ENCODE measurements at regions of chr19 and their contacts with region 1.

Region 1: GRCh38 chr19:55503502-55504251 is 15.4 kb downstream of the SSC5D start:
- DNase-seq: peak; percentile 90
- H3K4me3 Mint-ChIP-seq: peak overlapping the region; percentile 62
- H3K27ac Mint-ChIP-seq: peak overlapping the region; percentile 40
- H3K4me1 Mint-ChIP-seq: peaks cover 14% of the 10 kb centered on the region
- H3K27me3 Mint-ChIP-seq: no peaks in the 10 kb centered on the region

Region 2: GRCh38 chr19:55146078-55146704 is 357.5 kb before region 1 on chr19:
- CTCF ChIA-PET with region 1: interaction called, 23 read pairs
- intact Hi-C with region 1: loop called (anchors 1 kb)
- DNase-seq: no peak
- H3K4me3 Mint-ChIP-seq: no peak overlapping the region
- H3K27ac Mint-ChIP-seq: no peak overlapping the region
- H3K4me1 Mint-ChIP-seq: peaks cover 6% of the 10 kb centered on the region
- H3K27me3 Mint-ChIP-seq: peaks cover 55% of the 10 kb centered on the region

Region 3: DNA sequence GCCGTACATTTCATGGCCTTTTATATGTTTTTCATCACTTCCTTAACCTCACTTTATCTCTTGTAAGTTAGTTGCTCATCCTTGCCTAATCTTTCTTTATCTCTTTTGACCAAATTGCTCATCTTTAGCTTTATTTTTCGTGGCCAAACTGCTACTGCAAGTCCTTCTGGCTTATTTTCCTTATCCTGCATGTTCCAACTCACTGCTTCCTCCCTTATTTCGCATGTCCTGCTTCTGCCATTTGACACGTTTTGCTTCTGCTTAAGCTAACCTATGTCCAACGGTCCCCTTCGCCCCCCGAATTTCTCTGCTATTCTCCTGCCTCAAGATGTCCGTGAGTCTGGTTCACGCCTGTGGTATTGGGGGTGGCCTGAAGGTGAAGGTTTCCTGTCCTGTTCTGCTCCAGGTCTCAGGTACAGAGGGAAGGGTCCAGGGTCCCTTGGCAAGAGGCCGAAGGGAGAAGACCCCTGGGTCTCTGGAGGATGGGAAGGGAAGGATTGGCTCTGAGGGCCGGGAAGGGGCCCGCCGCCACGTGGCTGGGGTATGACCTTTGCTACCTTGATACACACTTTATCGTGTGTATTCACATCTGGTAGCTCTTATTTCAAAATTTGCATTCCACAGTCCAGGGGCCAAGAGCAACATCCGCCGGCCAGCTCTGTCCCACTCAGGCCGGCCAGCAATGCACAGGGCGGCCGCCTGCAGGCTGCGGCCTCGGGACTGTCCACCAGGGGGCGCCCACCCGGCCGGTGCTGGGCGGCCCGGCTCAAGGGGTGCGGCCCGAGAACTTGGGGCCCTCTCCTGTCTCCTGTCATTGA is 36.2 kb before region 1 on chr19:
- CTCF ChIA-PET with region 1: interaction called, 64 read pairs
- intact Hi-C with region 1: loop called (anchors 1 kb)
- DNase-seq: peak; percentile 58
- H3K4me3 Mint-ChIP-seq: no peak overlapping the region
- H3K27ac Mint-ChIP-seq: no peak overlapping the region
- H3K4me1 Mint-ChIP-seq: peaks cover 2% of the 10 kb centered on the region
- H3K27me3 Mint-ChIP-seq: no peaks in the 10 kb centered on the region

Region 4: GRCh38 chr19:55487632-55488152 is 16.0 kb before region 1 on chr19:
- CTCF ChIA-PET with region 1: interaction called, 16 read pairs
- intact Hi-C with region 1: no loop called
- DNase-seq: peak; percentile 54
- H3K4me3 Mint-ChIP-seq: no peak overlapping the region
- H3K27ac Mint-ChIP-seq: no peak overlapping the region
- H3K4me1 Mint-ChIP-seq: peaks cover 17% of the 10 kb centered on the region
- H3K27me3 Mint-ChIP-seq: peaks cover 6% of the 10 kb centered on the region

Region 5: GRCh38 chr19:55632463-55632834 is 128.8 kb after region 1 on chr19:
- CTCF ChIA-PET with region 1: interaction called, 28 read pairs
- intact Hi-C with region 1: no loop called
- DNase-seq: peak; percentile 98
- H3K4me3 Mint-ChIP-seq: no peak overlapping the region
- H3K27ac Mint-ChIP-seq: peak overlapping the region; percentile 60
- H3K4me1 Mint-ChIP-seq: peaks cover 36% of the 10 kb centered on the region
- H3K27me3 Mint-ChIP-seq: no peaks in the 10 kb centered on the region

Measured in activated naive CD4-positive, alpha-beta T cell treated with anti-CD3 and anti-CD28 coated beads for 36 hours (primary cell).